ENCODE measurements at regions of chr2 and their contacts with region 1.

Region 1: GRCh38 chr2:47174733-47175361 is 19.7 kb upstream of the STPG4 start:
- DNase-seq: peak; percentile 38
- H3K4me3 ChIP-seq: peak overlapping the region; percentile 100
- H3K27ac ChIP-seq: peak overlapping the region; percentile 98 to 100
- H3K4me1 ChIP-seq: peaks cover 22 to 39% of the 10 kb centered on the region in 2 experiments; a peak in 3 of 4 replicates
- H3K27me3 ChIP-seq: no peaks in the 10 kb centered on the region
- CTCF ChIP-seq: no peak
- EP300 ChIP-seq: no peak
- RAD21 ChIP-seq: peak; percentile 26; the same call in 1 of the 2 replicates

Region 2: DNA sequence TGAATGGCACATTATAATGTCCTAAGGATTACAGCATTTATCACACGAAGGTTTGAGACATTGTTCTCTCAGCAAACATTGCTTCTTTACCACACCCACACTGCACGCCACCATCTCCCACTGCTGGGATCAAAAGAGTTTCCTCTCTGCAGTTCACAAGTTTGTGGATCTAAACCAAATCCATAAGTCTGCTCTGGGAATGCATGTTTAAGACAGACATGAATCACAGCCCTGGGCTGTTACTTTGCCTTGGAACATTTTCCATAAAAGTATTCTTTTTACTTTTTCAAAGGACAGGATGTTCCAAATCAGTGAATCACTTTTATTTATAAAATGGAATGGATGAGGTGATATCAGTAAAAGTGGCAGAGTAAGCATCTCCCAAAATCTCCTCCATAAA is 55.8 kb before region 1 on chr2:
- CTCF ChIA-PET with region 1: no interaction called
- POLR2A ChIA-PET with region 1: no interaction called
- DNase-seq: no peak
- H3K4me3 ChIP-seq: no peak overlapping the region
- H3K27ac ChIP-seq: peak overlapping the region; percentile 2 to 87; a peak in 3 of 4 replicates
- H3K4me1 ChIP-seq: peaks cover 4 to 17% of the 10 kb centered on the region in 2 experiments
- H3K27me3 ChIP-seq: no peaks in the 10 kb centered on the region
- CTCF ChIP-seq: no peak
- EP300 ChIP-seq: peak in 1 of 2 experiments; percentile 76; a peak in 2 of 4 replicates
- RAD21 ChIP-seq: no peak

Region 3: GRCh38 chr2:47155091-47155876 is 19.6 kb before region 1 on chr2 and contains the start of gene STPG4:
- CTCF ChIA-PET with region 1: interaction called, 12 read pairs
- POLR2A ChIA-PET with region 1: interaction called, 4 read pairs
- DNase-seq: no peak
- H3K4me3 ChIP-seq: no peak within 1 kb of the TSS
- H3K27ac ChIP-seq: peak within 1 kb of the TSS; percentile 35 to 58
- H3K4me1 ChIP-seq: peaks cover 0 to 3% of the 10 kb centered on the region in 2 experiments; a peak in 1 of 4 replicates
- H3K27me3 ChIP-seq: no peaks in the 10 kb centered on the region
- CTCF ChIP-seq: no peak
- EP300 ChIP-seq: no peak
- RAD21 ChIP-seq: no peak
- polyA plus RNA-seq, gene STPG4: 0.20 and 0.21 TPM in 2 replicates

Region 4: GRCh38 chr2:47221956-47222355 is 47.1 kb after region 1 on chr2:
- CTCF ChIA-PET with region 1: no interaction called
- POLR2A ChIA-PET with region 1: no interaction called
- DNase-seq: no peak
- H3K4me3 ChIP-seq: no peak overlapping the region
- H3K27ac ChIP-seq: no peak overlapping the region
- H3K4me1 ChIP-seq: peaks cover 18 to 27% of the 10 kb centered on the region in 2 experiments
- H3K27me3 ChIP-seq: no peaks in the 10 kb centered on the region
- CTCF ChIP-seq: no peak
- EP300 ChIP-seq: no peak
- RAD21 ChIP-seq: no peak

Region 5: DNA sequence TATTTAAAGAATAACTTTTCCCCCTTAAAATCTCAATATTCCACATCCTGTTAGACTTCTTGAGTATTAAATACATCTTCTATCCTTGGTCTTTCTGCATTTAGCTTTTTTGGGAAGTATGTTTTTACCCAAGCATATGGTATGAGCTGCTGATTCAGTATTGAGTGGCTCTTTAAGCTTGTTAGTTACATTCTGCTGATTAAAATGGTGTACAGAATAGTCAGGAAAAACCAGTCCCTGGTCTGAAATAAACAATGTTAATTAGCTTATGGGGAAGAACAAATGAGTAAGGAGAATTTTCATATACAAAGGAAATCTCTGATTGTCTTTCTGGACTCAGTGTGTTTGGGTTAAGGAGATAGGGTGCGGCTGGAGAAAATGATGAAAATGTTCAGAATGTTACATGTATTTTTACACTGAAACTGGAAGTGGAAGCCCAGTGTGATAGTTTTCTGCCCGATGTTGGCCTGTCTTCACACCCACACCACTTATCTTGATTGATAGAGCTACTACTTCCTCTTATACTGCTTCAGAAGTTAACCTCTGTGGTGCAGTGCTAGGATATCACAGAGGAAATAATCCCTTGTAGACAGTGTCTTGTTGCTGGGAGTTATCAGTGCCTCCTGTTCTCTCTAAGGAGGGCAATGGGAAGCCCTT is 312.1 kb after region 1 on chr2:
- CTCF ChIA-PET with region 1: no interaction called
- POLR2A ChIA-PET with region 1: no interaction called
- DNase-seq: no peak
- H3K4me3 ChIP-seq: no peak overlapping the region
- H3K27ac ChIP-seq: no peak overlapping the region
- H3K4me1 ChIP-seq: no peaks in the 10 kb centered on the region
- H3K27me3 ChIP-seq: no peaks in the 10 kb centered on the region
- CTCF ChIP-seq: no peak
- EP300 ChIP-seq: no peak
- RAD21 ChIP-seq: no peak

Measured in SK-N-SH (cell line).